Endothelial cell of umbilical vein (primary cell): ENCODE measurements at regions of chr5 and their contacts with region 1.

Region 1: DNA sequence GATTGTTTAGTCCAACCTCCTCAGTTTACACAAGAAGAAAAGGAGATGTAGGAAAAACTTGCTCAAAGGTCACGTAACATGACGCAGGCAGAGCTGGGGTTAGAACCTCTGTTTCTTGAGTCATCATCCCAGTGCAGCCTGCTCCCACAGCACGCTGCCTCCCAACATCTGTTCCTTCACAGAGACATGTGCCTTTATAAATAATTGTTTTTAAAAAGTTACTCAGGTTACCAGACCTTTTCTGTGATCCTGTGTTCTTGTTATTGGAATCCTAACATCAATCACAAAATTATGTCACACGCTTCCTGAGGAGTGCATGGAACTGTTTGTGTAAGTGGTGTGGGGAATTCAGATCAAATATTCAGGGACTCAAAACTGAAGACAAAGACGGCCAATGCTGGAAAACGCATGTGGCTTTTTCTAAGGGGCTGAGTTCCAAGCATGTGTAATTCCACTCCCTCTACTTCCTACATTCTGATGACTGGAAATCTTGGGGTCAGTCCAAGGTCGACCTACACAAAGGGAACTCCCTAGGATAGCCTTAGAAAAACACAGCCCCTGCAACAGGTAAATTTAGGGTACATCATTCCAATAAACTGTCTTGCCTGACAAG is 184.3 kb downstream of the TSSK1B start:
- DNase-seq: peak; percentile 98
- H3K4me3 ChIP-seq: no peak overlapping the region
- H3K27ac ChIP-seq: peak overlapping the region; percentile 68
- H3K4me1 ChIP-seq: peaks cover 34% of the 10 kb centered on the region
- H3K27me3 ChIP-seq: no peaks in the 10 kb centered on the region
- CTCF ChIP-seq: no peak
- POLR2A ChIP-seq: no peak

Region 2: DNA sequence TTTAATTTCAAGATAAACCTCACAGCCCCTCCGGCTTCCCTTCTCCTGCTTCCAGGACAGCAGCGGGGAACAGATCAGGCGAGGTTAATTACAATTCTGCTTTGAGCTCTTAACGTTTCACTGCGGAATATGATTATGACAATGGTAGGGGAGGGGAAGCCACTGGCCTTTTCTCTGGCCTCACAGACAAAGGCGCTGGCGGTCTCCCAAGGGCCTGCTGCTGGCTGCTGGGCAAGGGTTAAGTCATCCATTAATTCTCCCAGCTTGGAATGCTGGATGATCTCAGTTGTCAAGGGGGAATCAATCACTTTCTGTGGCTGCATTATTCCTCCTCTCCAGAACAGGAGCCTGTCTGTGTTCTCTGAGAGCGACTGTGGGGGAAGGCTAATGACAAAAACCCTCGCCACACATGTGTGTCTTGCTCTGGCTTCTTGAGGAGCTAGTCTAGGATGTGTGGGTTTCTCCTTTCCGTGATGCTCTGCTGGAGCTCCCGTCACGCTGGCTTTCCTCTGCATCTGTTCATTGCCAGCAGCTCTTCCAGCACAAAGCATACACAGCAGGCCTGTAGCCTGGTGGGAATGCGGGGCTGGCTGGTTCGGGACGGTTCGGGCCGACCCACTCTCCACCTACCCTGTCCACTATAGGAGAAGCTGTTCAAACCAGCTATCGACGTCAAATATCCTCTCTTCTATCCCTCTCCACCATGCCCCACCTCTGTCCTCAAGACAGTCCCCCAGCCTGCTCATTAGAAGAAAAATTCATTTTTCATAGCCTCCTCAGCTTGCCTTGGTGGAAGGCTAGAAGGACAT is 191.0 kb before region 1 on chr5:
- CTCF ChIA-PET with region 1: no interaction called
- POLR2A ChIA-PET with region 1: no interaction called
- dilution Hi-C with region 1: no loop called
- intact Hi-C with region 1: no loop called
- DNase-seq: peak; percentile 87
- H3K4me3 ChIP-seq: no peak overlapping the region
- H3K27ac ChIP-seq: peak overlapping the region; percentile 81
- H3K4me1 ChIP-seq: peaks cover 16% of the 10 kb centered on the region
- H3K27me3 ChIP-seq: no peaks in the 10 kb centered on the region
- CTCF ChIP-seq: no peak
- POLR2A ChIP-seq: no peak

Region 3: GRCh38 chr5:113271015-113271414 is 20.6 kb after region 1 on chr5:
- CTCF ChIA-PET with region 1: interaction called, 3 read pairs
- POLR2A ChIA-PET with region 1: no interaction called
- dilution Hi-C with region 1: no loop called
- intact Hi-C with region 1: loop called (anchors 1 kb)
- DNase-seq: peak; percentile 90
- H3K4me3 ChIP-seq: no peak overlapping the region
- H3K27ac ChIP-seq: peak overlapping the region; percentile 75
- H3K4me1 ChIP-seq: peaks cover 53% of the 10 kb centered on the region
- H3K27me3 ChIP-seq: no peaks in the 10 kb centered on the region
- CTCF ChIP-seq: no peak
- POLR2A ChIP-seq: no peak